ENCODE measurements at regions of chr1 and their contacts with region 1.

Region 1: DNA sequence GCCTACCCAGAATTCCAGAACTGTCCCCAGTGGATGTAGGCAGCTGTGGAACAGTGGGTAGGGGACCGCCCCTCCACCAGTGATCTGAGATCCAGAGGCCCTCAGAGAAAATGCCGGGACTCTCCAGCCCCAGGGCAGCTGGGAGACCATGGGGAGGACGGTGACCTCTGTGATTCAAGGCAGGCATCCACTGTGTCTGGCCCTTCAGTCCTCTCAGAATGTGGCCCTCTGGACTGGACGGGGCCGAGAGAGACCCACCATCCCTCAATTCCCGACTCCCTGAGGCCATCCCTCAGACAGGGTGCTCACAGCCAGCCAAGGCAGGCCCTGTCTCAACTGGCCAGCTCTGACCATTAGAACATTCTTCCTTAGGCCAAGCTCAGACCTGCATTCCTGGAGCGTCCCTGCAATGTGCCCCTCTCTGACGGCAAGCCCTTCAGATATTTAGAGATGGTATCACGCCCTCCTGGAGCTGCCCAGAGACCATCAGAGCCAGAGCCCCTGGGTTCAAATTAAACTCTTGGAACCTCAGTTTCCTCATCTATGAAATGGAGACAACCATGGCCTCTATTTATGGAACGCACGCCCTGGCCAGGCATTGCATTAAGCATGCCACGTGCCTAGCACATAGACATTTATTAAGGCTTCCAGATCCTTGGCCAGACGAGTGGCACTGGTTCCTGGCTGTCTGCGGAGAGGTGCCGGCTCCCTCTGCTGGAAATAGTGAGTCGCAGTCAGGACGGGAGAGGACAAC is 9.6 kb upstream of the EPS8L3 start:
- DNase-seq: peak; percentile 72 to 82 (median 78)
- H3K4me3 ChIP-seq: no peak overlapping the region
- H3K4me3 Mint-ChIP-seq: no peak overlapping the region
- H3K27ac ChIP-seq: no peak overlapping the region
- H3K27ac Mint-ChIP-seq: peak overlapping the region in 1 of 7 donors; percentile 19
- H3K4me1 ChIP-seq: no peaks in the 10 kb centered on the region
- H3K4me1 Mint-ChIP-seq: peaks cover 4% of the 10 kb centered on the region
- H3K27me3 ChIP-seq: no peaks in the 10 kb centered on the region
- H3K27me3 Mint-ChIP-seq: peaks cover 0 to 15% (median 13%) of the 10 kb centered on the region in 3 donors
- CTCF ChIP-seq: peak; percentile 81

Region 2: GRCh38 chr1:109412551-109412950 is 360.8 kb before region 1 on chr1:
- intact Hi-C with region 1: no loop called
- DNase-seq: no peak
- H3K4me3 ChIP-seq: no peak overlapping the region
- H3K4me3 Mint-ChIP-seq: no peak overlapping the region
- H3K27ac ChIP-seq: no peak overlapping the region
- H3K27ac Mint-ChIP-seq: no peak overlapping the region
- H3K4me1 ChIP-seq: no peaks in the 10 kb centered on the region
- H3K4me1 Mint-ChIP-seq: no peaks in the 10 kb centered on the region
- H3K27me3 ChIP-seq: no peaks in the 10 kb centered on the region
- H3K27me3 Mint-ChIP-seq: peaks cover 0 to 1% (median 0%) of the 10 kb centered on the region in 3 donors
- CTCF ChIP-seq: no peak

Region 3: DNA sequence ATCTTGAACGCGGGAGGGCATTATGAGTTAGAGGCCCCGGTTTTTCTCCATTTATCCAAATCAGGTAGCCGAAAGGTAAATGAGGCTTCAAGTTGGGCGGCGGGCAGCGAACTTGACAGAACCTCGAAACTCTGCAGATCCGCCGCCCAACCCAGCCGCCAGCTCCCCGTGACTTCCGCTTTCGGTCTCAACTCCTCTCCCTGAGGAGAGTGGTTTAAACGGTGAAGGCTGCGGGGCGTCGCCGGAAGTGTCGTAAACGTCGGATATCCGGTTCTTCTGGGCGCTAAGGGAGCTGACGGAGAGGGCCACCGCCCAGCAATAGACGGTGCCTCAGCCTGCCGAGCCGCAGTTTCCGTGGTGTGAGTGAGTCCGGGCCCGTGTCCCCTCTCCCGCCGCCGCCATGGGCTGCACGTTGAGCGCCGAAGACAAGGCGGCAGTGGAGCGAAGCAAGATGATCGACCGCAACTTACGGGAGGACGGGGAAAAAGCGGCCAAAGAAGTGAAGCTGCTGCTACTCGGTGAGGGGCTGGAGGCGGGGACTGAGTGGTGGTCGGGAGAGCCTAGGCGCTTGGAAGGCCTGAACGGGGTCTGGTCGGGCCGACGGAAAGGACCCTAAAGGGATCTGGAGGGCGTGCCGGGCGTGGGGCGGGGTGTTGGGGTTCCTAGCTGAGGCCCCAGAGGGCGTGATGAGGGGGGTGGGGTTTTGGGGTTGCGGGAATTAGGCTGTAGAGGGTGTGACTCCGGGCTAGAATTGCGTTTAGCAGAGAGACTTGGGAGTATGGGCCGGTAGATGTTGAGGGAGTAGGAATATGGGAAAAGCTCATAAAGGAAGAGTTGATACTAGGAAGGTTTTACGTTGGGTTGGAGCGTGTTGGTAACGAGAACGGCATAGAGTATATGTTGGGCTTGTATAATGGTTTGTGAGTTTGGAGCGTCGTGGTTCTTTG is 224.7 kb before region 1 on chr1 and contains the start of gene GNAI3:
- intact Hi-C with region 1: loop called (anchors 2 to 5 kb)
- DNase-seq: peak; percentile 98 to 99 (median 98)
- H3K4me3 ChIP-seq: peak within 1 kb of the TSS; percentile 73 to 99 (median 96)
- H3K4me3 Mint-ChIP-seq: peak within 1 kb of the TSS; percentile 99 to 100
- H3K27ac ChIP-seq: peak within 1 kb of the TSS; percentile 96 to 99
- H3K27ac Mint-ChIP-seq: peak within 1 kb of the TSS; percentile 99 to 100 (median 100)
- H3K4me1 ChIP-seq: peaks cover 23 to 52% of the 10 kb centered on the region in 2 donors
- H3K4me1 Mint-ChIP-seq: peaks cover 50% of the 10 kb centered on the region
- H3K27me3 ChIP-seq: no peaks in the 10 kb centered on the region
- H3K27me3 Mint-ChIP-seq: no peaks in the 10 kb centered on the region
- CTCF ChIP-seq: no peak
- polyA plus RNA-seq, gene GNAI3: 3.0 to 14.2 (median 10.4) TPM

Region 4: GRCh38 chr1:109643385-109644230 is 129.7 kb before region 1 on chr1:
- intact Hi-C with region 1: loop called (anchors 2 kb)
- DNase-seq: peak; percentile 59 to 75 (median 70)
- H3K4me3 ChIP-seq: no peak overlapping the region
- H3K4me3 Mint-ChIP-seq: peak overlapping the region in 1 of 2 donors; percentile 51
- H3K27ac ChIP-seq: no peak overlapping the region
- H3K27ac Mint-ChIP-seq: no peak overlapping the region
- H3K4me1 ChIP-seq: peaks cover 7 to 14% of the 10 kb centered on the region in 2 donors
- H3K4me1 Mint-ChIP-seq: peaks cover 16% of the 10 kb centered on the region
- H3K27me3 ChIP-seq: no peaks in the 10 kb centered on the region
- H3K27me3 Mint-ChIP-seq: peaks cover 3 to 7% (median 4%) of the 10 kb centered on the region in 3 donors
- CTCF ChIP-seq: peak; percentile 93

Region 5: DNA sequence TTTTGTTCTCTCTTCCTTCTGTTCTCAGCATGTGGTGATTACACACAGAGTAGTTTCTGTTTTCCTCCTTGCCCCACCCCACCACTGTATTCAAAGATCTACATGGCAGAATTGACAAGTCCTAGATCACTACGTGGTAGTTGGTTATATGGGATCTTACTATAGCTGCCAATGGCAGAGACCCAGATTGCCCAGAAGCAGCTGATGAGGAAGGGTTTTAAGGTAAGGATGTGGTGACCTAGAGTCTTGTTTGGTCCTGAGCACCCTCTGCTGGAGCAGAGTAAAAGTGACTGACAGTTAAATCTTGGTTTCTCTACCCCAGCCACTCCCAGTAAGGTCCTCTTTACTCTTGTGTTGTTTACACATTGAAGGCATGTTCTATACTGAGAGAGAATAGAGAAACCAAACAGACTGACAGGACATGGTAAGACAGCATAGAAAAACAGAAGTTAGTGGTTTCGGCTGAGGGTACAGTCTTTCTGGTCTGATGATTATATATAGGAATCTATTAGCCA is 238.3 kb after region 1 on chr1:
- intact Hi-C with region 1: loop called in 1 of 2 experiments (anchors 2 kb)
- DNase-seq: peak; percentile 48 to 70 (median 58)
- H3K4me3 ChIP-seq: no peak overlapping the region
- H3K4me3 Mint-ChIP-seq: no peak overlapping the region
- H3K27ac ChIP-seq: peak overlapping the region in 1 of 2 donors; percentile 60
- H3K27ac Mint-ChIP-seq: peak overlapping the region in 6 of 7 donors; percentile 49 to 83 (median 71)
- H3K4me1 ChIP-seq: peaks cover 13 to 20% of the 10 kb centered on the region in 2 donors
- H3K4me1 Mint-ChIP-seq: peaks cover 16% of the 10 kb centered on the region
- H3K27me3 ChIP-seq: no peaks in the 10 kb centered on the region
- H3K27me3 Mint-ChIP-seq: no peaks in the 10 kb centered on the region
- CTCF ChIP-seq: peak; percentile 68